Dendritic cell treated with granulocyte-macrophage colony-stimulating factor and Interleukin-4, amounts not matched to agents 40 ng/mL and 50 ng/mL, for 4 days (primary cell): ENCODE measurements at regions of chrX and their contacts with region 1.

Region 1: GRCh38 chrX:139559383-139560042 is 29.0 kb downstream of the F9 start:
- H3K4me3 Mint-ChIP-seq: no peak overlapping the region
- H3K27ac Mint-ChIP-seq: no peak overlapping the region
- H3K4me1 Mint-ChIP-seq: peaks cover 12% of the 10 kb centered on the region
- H3K27me3 Mint-ChIP-seq: no peaks in the 10 kb centered on the region

Region 2: DNA sequence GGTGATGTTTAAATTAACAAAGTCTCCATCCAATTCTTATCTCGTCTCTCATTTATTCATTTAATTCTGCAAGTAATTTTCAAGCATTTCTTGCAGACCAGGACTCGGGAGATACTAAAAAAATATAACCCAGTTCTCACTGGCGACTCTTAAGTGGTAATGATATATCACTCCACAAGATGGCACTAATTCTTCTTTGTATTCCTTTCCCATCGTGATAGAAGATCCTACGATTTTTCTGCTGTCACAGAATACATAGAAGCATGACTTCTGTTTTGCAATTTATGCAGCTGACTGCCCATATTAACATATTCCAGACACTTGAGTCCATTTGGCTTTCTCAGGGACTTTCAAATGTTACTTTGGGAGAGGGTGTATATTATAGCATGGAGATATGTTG is 784.0 kb before region 1 on chrX:
- intact Hi-C with region 1: loop called (anchors 1 kb)
- H3K4me3 Mint-ChIP-seq: no peak overlapping the region
- H3K27ac Mint-ChIP-seq: no peak overlapping the region
- H3K4me1 Mint-ChIP-seq: no peaks in the 10 kb centered on the region
- H3K27me3 Mint-ChIP-seq: no peaks in the 10 kb centered on the region

Region 3: DNA sequence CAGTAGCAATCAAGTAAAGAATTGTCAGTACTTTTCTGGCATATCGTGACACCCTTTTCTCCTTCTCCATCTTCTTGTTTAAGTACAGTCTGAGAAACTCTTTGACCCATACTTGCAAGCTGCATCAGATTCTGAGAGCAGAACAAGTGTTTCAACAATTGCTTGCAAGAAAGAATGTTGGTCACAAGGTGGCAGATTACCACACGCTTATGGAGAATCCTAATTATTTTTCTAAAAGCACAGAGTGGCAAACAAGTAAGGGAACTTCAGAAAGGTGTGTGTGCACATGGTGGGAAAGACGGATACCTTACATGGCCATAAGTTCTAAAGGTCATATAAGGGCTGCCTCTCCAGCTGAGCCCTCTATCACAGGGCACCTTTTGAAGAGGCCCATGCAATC is 711.6 kb before region 1 on chrX:
- intact Hi-C with region 1: loop called (anchors 5 kb)
- H3K4me3 Mint-ChIP-seq: no peak overlapping the region
- H3K27ac Mint-ChIP-seq: no peak overlapping the region
- H3K4me1 Mint-ChIP-seq: peaks cover 12% of the 10 kb centered on the region
- H3K27me3 Mint-ChIP-seq: peaks cover 5% of the 10 kb centered on the region

Region 4: GRCh38 chrX:139194571-139195280 is 364.8 kb before region 1 on chrX:
- intact Hi-C with region 1: loop called (anchors 10 kb)
- H3K4me3 Mint-ChIP-seq: peak overlapping the region; percentile 73
- H3K27ac Mint-ChIP-seq: peak overlapping the region; percentile 34
- H3K4me1 Mint-ChIP-seq: no peaks in the 10 kb centered on the region
- H3K27me3 Mint-ChIP-seq: peaks cover 26% of the 10 kb centered on the region